Activated CD8-positive, alpha-beta T cell treated with anti-CD3 and anti-CD28 coated beads for 36 hours (primary cell): ENCODE measurements at regions of chr2 and their contacts with region 1.

Region 1: GRCh38 chr2:191150600-191151330 is at the start of gene STAT4:
- DNase-seq: peak; percentile 96
- ATAC-seq: peak; percentile 86
- H3K4me3 Mint-ChIP-seq: peak within 1 kb of the TSS; percentile 86
- H3K27ac Mint-ChIP-seq: peak within 1 kb of the TSS; percentile 87
- H3K4me1 Mint-ChIP-seq: peaks cover 68% of the 10 kb centered on the region
- H3K27me3 Mint-ChIP-seq: no peaks in the 10 kb centered on the region
- CTCF ChIP-seq: no peak
- total RNA-seq, gene STAT4: 70.8 to 72.2 TPM

Region 2: DNA sequence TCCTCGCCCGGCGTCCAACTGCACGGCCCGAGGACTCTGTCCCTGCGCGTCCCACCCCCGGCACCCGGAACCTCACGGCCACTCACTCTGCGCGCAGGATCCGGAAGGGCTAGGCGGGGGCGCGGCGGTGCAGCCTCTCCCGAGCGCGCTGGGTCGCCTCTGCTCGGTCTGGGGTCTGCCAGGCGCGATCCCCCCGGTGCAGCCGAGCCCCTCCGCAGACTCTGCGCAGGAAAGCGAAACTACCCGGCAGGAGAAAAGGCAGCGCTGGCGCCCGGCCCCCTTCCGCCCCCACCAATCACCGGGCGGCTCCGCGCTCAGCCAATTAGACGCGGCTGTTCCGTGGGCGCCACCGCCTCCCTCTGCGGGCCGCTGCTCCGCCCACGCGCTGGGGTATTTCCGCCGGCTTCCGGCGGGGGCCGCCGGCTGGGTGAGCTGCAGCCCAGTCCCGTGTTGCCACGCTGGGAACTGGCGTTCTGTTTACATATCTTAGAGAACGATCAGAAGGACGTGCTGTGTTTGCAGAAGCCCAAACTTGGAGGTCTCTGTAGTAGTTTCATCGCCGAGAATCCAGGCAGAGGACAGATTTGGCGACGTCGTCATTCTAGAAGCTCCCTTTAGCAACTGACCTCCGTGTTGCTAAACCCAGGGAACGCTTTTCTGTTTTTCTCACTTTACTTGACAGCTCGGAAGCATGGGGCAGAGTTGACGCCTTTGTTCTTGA is 136.7 kb before region 1 on chr2 and contains the start of gene STAT1:
- CTCF ChIA-PET with region 1: interaction called, 6 read pairs
- POLR2A ChIA-PET with region 1: interaction called, 57 read pairs
- intact Hi-C with region 1: no loop called
- DNase-seq: peak; percentile 95
- ATAC-seq: peak; percentile 84
- H3K4me3 Mint-ChIP-seq: no peak within 1 kb of the TSS
- H3K27ac Mint-ChIP-seq: no peak within 1 kb of the TSS
- H3K4me1 Mint-ChIP-seq: peaks cover 36% of the 10 kb centered on the region
- H3K27me3 Mint-ChIP-seq: no peaks in the 10 kb centered on the region
- CTCF ChIP-seq: no peak
- total RNA-seq, gene STAT1: 293 to 311 TPM

Region 3: DNA sequence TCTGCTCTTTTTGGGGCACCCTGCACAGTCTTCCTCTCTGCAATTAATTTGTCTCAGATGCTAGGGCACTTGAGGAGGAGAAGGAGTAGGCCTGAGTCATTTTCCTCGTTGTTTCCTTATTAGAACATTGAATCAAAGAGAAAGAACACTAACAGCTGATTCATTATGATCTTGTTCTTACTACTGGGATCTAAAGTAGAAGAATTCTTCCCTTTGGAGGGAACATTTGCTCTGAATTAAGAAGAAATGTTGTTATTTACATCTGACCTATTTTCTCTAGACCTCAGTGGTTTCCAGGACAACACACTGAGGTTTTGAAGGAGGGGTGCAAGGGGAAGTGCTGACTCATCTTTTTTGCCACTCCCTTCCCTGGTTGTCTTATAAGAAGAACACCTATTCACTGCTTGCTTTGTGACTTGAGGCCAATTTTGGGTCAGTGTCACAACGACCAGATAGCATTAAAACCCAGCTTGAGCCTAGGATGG is 112.5 kb before region 1 on chr2:
- CTCF ChIA-PET with region 1: interaction called, 42 read pairs
- POLR2A ChIA-PET with region 1: interaction called, 6 read pairs
- intact Hi-C with region 1: no loop called
- DNase-seq: peak; percentile 41
- ATAC-seq: peak; percentile 67
- H3K4me3 Mint-ChIP-seq: no peak overlapping the region
- H3K27ac Mint-ChIP-seq: peak overlapping the region; percentile 76
- H3K4me1 Mint-ChIP-seq: peaks cover 29% of the 10 kb centered on the region
- H3K27me3 Mint-ChIP-seq: no peaks in the 10 kb centered on the region
- CTCF ChIP-seq: no peak

Region 4: DNA sequence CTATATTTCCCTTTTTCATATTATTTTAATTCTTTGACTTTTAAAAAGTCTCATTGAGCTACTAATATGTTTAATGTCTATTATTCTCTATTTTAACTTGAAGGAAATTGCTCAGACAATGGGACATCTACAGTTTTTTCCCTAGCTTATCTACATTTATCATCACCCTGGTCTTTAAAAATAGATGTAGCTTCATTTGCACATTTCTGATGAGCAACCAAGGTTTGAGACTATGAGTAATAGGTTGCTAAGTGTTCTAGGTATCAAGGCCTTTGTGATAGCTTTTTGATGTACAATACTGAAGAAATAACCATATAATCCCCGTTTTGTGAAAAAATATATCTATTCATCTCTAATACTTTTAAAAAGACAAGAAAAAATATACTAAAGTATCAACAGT is 47.0 kb before region 1 on chr2:
- CTCF ChIA-PET with region 1: interaction called, 19 read pairs
- POLR2A ChIA-PET with region 1: interaction called, 23 read pairs
- intact Hi-C with region 1: no loop called
- DNase-seq: no peak
- ATAC-seq: peak; percentile 69
- H3K4me3 Mint-ChIP-seq: no peak overlapping the region
- H3K27ac Mint-ChIP-seq: peak overlapping the region; percentile 57
- H3K4me1 Mint-ChIP-seq: peaks cover 79% of the 10 kb centered on the region
- H3K27me3 Mint-ChIP-seq: no peaks in the 10 kb centered on the region
- CTCF ChIP-seq: no peak

Region 5: GRCh38 chr2:191165176-191165643 is 14.4 kb after region 1 on chr2:
- CTCF ChIA-PET with region 1: interaction called, 46 read pairs
- POLR2A ChIA-PET with region 1: no interaction called
- intact Hi-C with region 1: no loop called
- DNase-seq: no peak
- ATAC-seq: peak; percentile 84
- H3K4me3 Mint-ChIP-seq: no peak overlapping the region
- H3K27ac Mint-ChIP-seq: no peak overlapping the region
- H3K4me1 Mint-ChIP-seq: peaks cover 25% of the 10 kb centered on the region
- H3K27me3 Mint-ChIP-seq: no peaks in the 10 kb centered on the region
- CTCF ChIP-seq: peak; percentile 84

Region 6: DNA sequence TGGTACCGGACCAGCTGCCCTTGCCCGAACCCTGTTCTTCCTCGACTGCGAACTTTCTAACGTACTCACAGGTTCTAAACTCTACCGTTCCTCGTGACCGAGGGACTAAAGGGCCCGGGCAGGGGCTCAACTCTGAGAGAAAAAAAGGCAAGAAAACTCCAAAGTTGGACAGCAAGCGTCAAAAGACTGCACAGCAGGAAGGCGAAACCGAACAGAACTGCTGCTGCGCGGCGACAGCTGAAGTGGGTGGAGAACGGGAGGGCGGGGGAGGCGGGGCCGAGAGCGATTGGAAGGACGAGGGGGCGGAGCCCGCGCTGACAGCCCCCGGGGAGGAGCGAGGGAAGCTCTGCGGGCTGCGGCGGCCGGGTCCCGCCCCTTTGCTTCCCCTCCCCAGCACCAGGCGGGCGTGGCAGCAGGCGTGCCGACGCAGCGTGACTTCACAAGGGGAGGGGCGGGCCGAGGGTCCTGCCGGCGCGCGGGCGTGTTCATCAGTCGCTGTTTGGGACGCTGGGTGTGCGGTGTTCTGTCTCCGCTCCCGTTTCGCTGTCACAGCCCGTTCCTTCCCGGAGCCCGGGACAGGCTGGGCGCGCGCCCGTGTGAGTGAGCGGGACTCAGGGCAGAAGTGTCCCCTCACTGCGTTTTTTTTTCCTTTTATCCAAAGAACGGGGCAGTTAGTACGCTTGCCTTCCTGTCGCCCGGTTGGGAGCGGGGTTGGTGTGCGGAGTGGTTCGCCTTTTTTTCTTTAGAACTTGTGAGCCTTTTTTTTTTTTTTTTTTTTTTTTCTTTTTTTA is 527.1 kb after region 1 on chr2 and contains the start of gene NABP1:
- CTCF ChIA-PET with region 1: interaction called, 4 read pairs
- POLR2A ChIA-PET with region 1: interaction called, 11 read pairs
- intact Hi-C with region 1: no loop called
- DNase-seq: peak; percentile 99
- ATAC-seq: peak; percentile 87
- H3K4me3 Mint-ChIP-seq: peak within 1 kb of the TSS; percentile 100
- H3K27ac Mint-ChIP-seq: peak within 1 kb of the TSS; percentile 99
- H3K4me1 Mint-ChIP-seq: peaks cover 53% of the 10 kb centered on the region
- H3K27me3 Mint-ChIP-seq: no peaks in the 10 kb centered on the region
- CTCF ChIP-seq: no peak
- total RNA-seq, gene NABP1: 30.5 to 31.7 TPM